ENCODE measurements at regions of chr11 and their contacts with region 1.

Region 1: DNA sequence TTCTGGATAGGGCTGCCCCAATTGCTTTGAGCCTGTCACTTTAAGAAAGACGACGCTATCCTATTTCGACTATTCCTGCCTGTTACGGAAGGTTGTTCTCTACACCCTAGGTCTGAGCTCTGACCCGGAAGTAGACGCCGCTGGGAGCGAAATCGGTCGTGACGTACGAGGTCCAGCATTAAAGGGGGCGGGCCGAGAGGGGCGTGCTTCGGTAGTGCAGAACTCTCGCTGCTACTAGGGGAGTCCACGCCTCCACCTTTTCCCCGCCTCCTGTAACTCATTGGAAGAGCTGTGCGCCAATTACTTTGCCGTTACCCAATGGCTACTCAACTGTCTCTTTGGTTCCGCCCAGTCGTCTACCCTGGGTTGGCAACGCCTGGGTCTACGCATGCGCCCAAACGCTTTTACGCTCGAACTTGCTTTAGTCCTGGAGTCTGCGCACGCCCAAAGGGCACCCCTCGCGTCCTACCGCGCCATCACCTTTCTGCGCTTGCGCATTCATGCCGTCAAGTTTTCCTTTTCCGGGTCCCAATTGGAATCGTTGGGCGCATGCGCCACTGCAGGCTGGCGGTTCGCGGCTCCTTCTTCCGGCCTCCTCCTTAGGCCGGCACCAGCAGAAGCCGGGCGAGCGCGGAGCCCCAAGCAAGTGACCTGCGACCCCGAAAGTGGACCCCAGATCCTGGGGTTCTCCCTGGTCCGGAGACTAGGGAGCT is at the start of gene PCNX3:
- DNase-seq: peak; percentile 100
- ATAC-seq: peak; percentile 88
- H3K4me3 ChIP-seq: peak within 1 kb of the TSS; percentile 64 to 93 (median 88)
- H3K4me3 Mint-ChIP-seq: peak within 1 kb of the TSS; percentile 98
- H3K27ac ChIP-seq: peak within 1 kb of the TSS; percentile 85 to 89
- H3K27ac Mint-ChIP-seq: peak within 1 kb of the TSS; percentile 97
- H3K4me1 ChIP-seq: peaks cover 39 to 47% of the 10 kb centered on the region in 2 donors
- H3K4me1 Mint-ChIP-seq: peaks cover 49% of the 10 kb centered on the region
- H3K27me3 ChIP-seq: no peaks in the 10 kb centered on the region
- H3K27me3 Mint-ChIP-seq: no peaks in the 10 kb centered on the region
- CTCF ChIP-seq: no peak
- total RNA-seq, gene PCNX3: 61.4 and 61.5 TPM in 2 replicates

Region 2: DNA sequence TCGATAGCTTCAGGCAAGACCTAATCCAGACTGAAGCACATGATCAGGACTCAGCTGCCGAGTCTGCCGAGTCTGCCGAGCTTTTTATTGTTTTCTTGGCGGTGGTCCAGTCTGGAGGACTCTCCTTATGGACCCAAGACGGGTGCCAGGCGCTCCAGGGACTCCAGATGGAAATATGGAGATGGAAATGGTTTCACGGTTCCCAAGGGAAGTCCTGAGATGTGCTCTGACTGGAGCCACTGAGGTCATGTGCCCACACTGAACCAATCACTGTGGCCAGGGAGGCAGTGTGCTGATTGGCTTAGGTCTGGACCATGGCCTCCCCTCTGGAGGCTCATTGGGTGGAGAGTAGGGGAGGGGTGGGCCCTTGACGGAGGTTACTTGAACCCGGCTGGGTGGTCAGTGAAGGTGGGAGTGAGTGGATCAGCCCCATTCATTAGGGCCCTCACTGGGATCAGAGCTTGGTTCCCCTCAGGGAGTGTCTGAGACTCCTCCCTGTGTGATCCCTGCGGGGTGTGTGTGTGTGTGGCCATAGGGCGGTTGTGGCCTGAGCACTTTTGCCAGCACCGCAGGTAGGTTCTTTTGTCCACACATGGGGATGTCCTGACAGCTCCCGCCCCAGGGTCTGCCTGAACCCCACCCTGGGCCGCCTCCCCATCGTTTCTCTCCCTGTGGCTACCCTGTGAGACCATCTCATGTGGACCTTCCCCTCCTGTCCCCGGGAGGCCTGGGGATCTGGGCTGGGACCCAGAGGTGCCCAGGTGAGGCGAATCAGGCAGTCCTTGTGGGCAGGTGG is 1242.4 kb before region 1 on chr11:
- CTCF ChIA-PET with region 1: no interaction called
- POLR2A ChIA-PET with region 1: no interaction called
- intact Hi-C with region 1: no loop called
- DNase-seq: no peak
- ATAC-seq: no peak
- H3K4me3 ChIP-seq: no peak overlapping the region
- H3K4me3 Mint-ChIP-seq: no peak overlapping the region
- H3K27ac ChIP-seq: no peak overlapping the region
- H3K27ac Mint-ChIP-seq: no peak overlapping the region
- H3K4me1 ChIP-seq: peaks cover 6 to 15% of the 10 kb centered on the region in 2 donors
- H3K4me1 Mint-ChIP-seq: peaks cover 6% of the 10 kb centered on the region
- H3K27me3 ChIP-seq: no peaks in the 10 kb centered on the region
- H3K27me3 Mint-ChIP-seq: no peaks in the 10 kb centered on the region
- CTCF ChIP-seq: no peak

Region 3: DNA sequence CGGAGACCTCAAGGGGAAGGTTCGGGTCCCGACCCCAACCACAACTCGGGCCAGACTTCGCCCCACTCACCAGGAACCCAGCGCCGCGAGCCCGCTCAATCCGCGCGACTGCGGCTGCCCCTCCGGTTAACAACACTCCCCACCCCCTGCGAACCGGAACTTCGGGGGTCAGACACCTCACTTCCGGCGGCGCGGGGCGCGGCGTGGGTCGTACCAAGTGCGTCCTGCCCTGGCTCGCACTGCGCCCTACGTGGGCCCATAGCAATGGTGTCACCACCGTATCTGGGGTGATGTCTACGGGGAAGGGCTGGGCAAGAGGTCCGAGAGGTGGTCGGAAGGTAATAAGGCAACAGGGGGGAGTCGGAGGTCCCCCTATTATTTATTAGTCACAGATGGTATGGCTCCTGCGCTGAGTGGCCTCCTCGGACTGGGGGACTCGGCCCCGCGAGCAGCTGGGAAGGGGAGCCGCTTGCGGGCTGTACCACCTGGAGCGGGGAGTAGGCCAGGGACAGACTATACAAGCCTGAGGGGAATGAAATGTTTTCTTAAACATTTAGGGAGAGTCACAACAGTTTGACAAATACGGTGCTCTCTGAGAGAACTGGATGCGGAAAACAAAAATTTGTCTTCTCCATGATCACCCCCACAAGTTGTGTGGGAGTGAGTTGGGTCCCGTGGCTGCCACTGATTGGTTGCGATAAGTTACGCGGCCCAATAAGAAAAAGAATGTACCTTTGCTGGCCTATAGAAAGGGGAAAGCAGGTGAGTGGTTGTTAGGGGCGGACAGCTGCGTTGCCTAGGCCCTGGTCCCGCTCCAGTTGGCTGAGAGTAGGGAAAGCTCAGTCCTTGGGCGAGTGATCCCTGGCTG is 480.8 kb before region 1 on chr11 and contains the start of gene SYVN1:
- CTCF ChIA-PET with region 1: no interaction called
- POLR2A ChIA-PET with region 1: no interaction called
- intact Hi-C with region 1: loop called (anchors 5 kb)
- DNase-seq: peak; percentile 97
- ATAC-seq: peak; percentile 64
- H3K4me3 ChIP-seq: peak within 1 kb of the TSS; percentile 81 to 99 (median 96)
- H3K4me3 Mint-ChIP-seq: peak within 1 kb of the TSS; percentile 97
- H3K27ac ChIP-seq: peak within 1 kb of the TSS; percentile 98 to 99
- H3K27ac Mint-ChIP-seq: peak within 1 kb of the TSS; percentile 99
- H3K4me1 ChIP-seq: peaks cover 36 to 57% of the 10 kb centered on the region in 2 donors
- H3K4me1 Mint-ChIP-seq: peaks cover 66% of the 10 kb centered on the region
- H3K27me3 ChIP-seq: no peaks in the 10 kb centered on the region
- H3K27me3 Mint-ChIP-seq: no peaks in the 10 kb centered on the region
- CTCF ChIP-seq: no peak
- total RNA-seq, gene SYVN1: 187 and 188 TPM in 2 replicates

Region 4: DNA sequence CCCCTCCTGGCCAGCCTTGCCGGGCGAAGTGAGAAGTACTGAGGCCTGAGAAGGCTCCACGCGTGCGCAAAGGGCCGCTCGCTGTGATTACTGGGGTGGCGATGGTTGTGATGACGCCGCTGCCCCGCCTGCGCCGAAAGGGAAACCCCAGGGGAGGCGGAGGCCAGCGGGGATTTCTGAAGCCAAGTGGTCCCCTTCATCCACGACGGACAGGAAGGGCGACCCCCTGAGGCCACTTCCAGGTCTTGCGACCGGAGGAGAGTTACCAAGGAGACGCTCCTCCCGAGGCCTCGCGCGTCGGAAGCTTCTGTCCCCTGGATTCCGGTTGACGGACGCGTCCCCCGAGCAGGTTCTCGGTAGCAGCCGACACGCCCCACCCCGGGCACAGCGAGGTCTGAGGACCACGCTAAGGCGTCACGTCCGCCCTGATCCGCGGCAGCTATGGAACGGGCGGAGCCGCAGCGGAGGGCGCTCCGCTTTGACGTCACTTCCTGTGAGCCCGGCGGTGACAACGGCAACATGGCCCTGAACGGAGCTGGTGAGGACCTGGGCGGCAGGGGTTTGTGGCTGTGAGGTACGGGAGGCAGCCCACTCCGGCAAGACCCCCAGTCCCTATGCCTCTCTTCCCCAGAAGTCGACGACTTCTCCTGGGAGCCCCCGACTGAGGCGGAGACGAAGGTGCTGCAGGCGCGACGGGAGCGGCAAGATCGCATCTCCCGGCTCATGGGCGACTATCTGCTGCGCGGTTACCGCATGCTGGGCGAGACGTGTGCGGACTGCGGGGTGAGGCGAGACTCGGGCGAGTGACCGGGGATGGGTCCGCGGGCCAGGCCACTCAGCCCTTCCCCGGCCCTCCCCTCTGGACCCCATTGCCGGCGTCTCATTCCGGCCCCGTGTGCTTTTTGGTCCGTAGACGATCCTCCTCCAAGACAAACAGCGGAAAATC is 45.1 kb before region 1 on chr11 and contains the start of gene ZNRD2:
- CTCF ChIA-PET with region 1: interaction called, 14 read pairs
- POLR2A ChIA-PET with region 1: interaction called, 18 read pairs
- intact Hi-C with region 1: loop called (anchors 1 kb)
- DNase-seq: peak; percentile 99
- ATAC-seq: peak; percentile 67
- H3K4me3 ChIP-seq: peak within 1 kb of the TSS; percentile 58 to 89 (median 83)
- H3K4me3 Mint-ChIP-seq: peak within 1 kb of the TSS; percentile 99
- H3K27ac ChIP-seq: peak within 1 kb of the TSS; percentile 96 to 97
- H3K27ac Mint-ChIP-seq: peak within 1 kb of the TSS; percentile 99
- H3K4me1 ChIP-seq: peaks cover 58 to 77% of the 10 kb centered on the region in 2 donors
- H3K4me1 Mint-ChIP-seq: peaks cover 75% of the 10 kb centered on the region
- H3K27me3 ChIP-seq: no peaks in the 10 kb centered on the region
- H3K27me3 Mint-ChIP-seq: no peaks in the 10 kb centered on the region
- CTCF ChIP-seq: peak; percentile 48
- total RNA-seq, gene ZNRD2: 22.1 and 24.0 TPM in 2 replicates

Region 5: GRCh38 chr11:65625628-65626342 is 10.4 kb after region 1 on chr11:
- CTCF ChIA-PET with region 1: interaction called, 12 read pairs
- POLR2A ChIA-PET with region 1: interaction called, 5 read pairs
- intact Hi-C with region 1: no loop called
- DNase-seq: peak; percentile 84
- ATAC-seq: peak; percentile 95
- H3K4me3 ChIP-seq: no peak overlapping the region
- H3K4me3 Mint-ChIP-seq: no peak overlapping the region
- H3K27ac ChIP-seq: no peak overlapping the region
- H3K27ac Mint-ChIP-seq: peak overlapping the region; percentile 5
- H3K4me1 ChIP-seq: peaks cover 6 to 11% of the 10 kb centered on the region in 2 donors
- H3K4me1 Mint-ChIP-seq: peaks cover 12% of the 10 kb centered on the region
- H3K27me3 ChIP-seq: no peaks in the 10 kb centered on the region
- H3K27me3 Mint-ChIP-seq: no peaks in the 10 kb centered on the region
- CTCF ChIP-seq: peak; percentile 83

Region 6: GRCh38 chr11:65662799-65663638 is 47.6 kb after region 1 on chr11 and contains the start of gene RELA:
- CTCF ChIA-PET with region 1: interaction called, 3 read pairs
- POLR2A ChIA-PET with region 1: interaction called, 14 read pairs
- intact Hi-C with region 1: loop called (anchors 1 kb)
- DNase-seq: peak; percentile 94
- ATAC-seq: peak; percentile 86
- H3K4me3 ChIP-seq: peak within 1 kb of the TSS; percentile 85 to 99 (median 95)
- H3K4me3 Mint-ChIP-seq: peak within 1 kb of the TSS; percentile 89
- H3K27ac ChIP-seq: peak within 1 kb of the TSS; percentile 97 to 100
- H3K27ac Mint-ChIP-seq: peak within 1 kb of the TSS; percentile 94
- H3K4me1 ChIP-seq: peaks cover 19 to 32% of the 10 kb centered on the region in 2 donors
- H3K4me1 Mint-ChIP-seq: peaks cover 31% of the 10 kb centered on the region
- H3K27me3 ChIP-seq: no peaks in the 10 kb centered on the region
- H3K27me3 Mint-ChIP-seq: no peaks in the 10 kb centered on the region
- CTCF ChIP-seq: no peak
- total RNA-seq, gene RELA: 154 and 160 TPM in 2 replicates

Region 7: GRCh38 chr11:65859200-65859811 is 243.9 kb after region 1 on chr11:
- CTCF ChIA-PET with region 1: interaction called, 5 read pairs
- POLR2A ChIA-PET with region 1: interaction called, 9 read pairs
- intact Hi-C with region 1: loop called (anchors 1 kb)
- DNase-seq: peak; percentile 97
- ATAC-seq: peak; percentile 62
- H3K4me3 ChIP-seq: peak overlapping the region; percentile 81 to 98 (median 95)
- H3K4me3 Mint-ChIP-seq: peak overlapping the region; percentile 92
- H3K27ac ChIP-seq: peak overlapping the region; percentile 77 to 89
- H3K27ac Mint-ChIP-seq: peak overlapping the region; percentile 98
- H3K4me1 ChIP-seq: peaks cover 27 to 54% of the 10 kb centered on the region in 2 donors
- H3K4me1 Mint-ChIP-seq: peaks cover 47% of the 10 kb centered on the region
- H3K27me3 ChIP-seq: no peaks in the 10 kb centered on the region
- H3K27me3 Mint-ChIP-seq: no peaks in the 10 kb centered on the region
- CTCF ChIP-seq: no peak

Region 8: GRCh38 chr11:65873318-65874156 is 258.2 kb after region 1 on chr11:
- CTCF ChIA-PET with region 1: no interaction called
- POLR2A ChIA-PET with region 1: no interaction called
- intact Hi-C with region 1: no loop called
- DNase-seq: peak; percentile 97
- ATAC-seq: peak; percentile 98
- H3K4me3 ChIP-seq: peak overlapping the region; percentile 52 to 79 (median 63)
- H3K4me3 Mint-ChIP-seq: peak overlapping the region; percentile 92
- H3K27ac ChIP-seq: peak overlapping the region; percentile 81 to 91
- H3K27ac Mint-ChIP-seq: peak overlapping the region; percentile 91
- H3K4me1 ChIP-seq: peaks cover 10 to 29% of the 10 kb centered on the region in 2 donors
- H3K4me1 Mint-ChIP-seq: peaks cover 26% of the 10 kb centered on the region
- H3K27me3 ChIP-seq: no peaks in the 10 kb centered on the region
- H3K27me3 Mint-ChIP-seq: peaks cover 5% of the 10 kb centered on the region
- CTCF ChIP-seq: no peak

Region 9: GRCh38 chr11:67345920-67346799 is 1730.8 kb after region 1 on chr11:
- CTCF ChIA-PET with region 1: no interaction called
- POLR2A ChIA-PET with region 1: no interaction called
- intact Hi-C with region 1: no loop called
- DNase-seq: no peak
- ATAC-seq: peak; percentile 48
- H3K4me3 ChIP-seq: no peak overlapping the region
- H3K4me3 Mint-ChIP-seq: peak overlapping the region; percentile 77
- H3K27ac ChIP-seq: peak overlapping the region; percentile 61 to 84
- H3K27ac Mint-ChIP-seq: peak overlapping the region; percentile 88
- H3K4me1 ChIP-seq: peaks cover 66 to 80% of the 10 kb centered on the region in 2 donors
- H3K4me1 Mint-ChIP-seq: peaks cover 70% of the 10 kb centered on the region
- H3K27me3 ChIP-seq: no peaks in the 10 kb centered on the region
- H3K27me3 Mint-ChIP-seq: no peaks in the 10 kb centered on the region
- CTCF ChIP-seq: peak; percentile 79

Measured in B cell (primary cell).